SK-N-SH (cell line): ENCODE measurements at regions of chr19 and their contacts with region 1.

Region 1: DNA sequence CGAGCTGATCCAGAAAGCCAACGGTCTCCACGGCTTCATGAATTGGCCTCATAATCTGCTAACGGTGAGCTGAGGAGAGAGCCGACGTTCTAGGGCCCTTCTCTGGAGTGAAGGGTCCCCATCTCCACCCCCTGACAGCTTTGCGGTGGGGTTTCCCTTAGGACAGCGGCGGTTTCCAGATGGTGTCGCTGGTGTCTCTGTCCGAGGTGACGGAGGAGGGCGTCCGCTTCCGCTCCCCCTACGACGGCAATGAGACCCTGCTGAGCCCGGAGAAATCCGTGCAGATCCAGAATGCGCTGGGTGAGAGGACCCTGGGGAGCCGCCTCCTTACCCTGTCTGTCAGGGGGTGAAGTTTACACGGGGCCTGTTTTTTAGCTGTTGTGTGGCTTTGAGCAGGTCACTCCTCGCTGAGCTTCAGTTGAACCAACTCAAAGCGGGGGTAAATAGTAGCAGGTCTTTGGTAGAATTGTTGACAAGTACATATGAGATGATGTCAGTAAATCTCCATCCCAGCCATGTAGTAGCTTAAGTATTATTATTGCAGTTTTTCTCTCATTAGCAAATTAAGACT is 801 bp downstream of the QTRT1 start:
- DNase-seq: peak; percentile 82
- H3K4me3 ChIP-seq: peak overlapping the region; percentile 69 to 70
- H3K27ac ChIP-seq: peak overlapping the region; percentile 45 to 46; a peak in 2 of 4 replicates
- H3K4me1 ChIP-seq: no peaks in the 10 kb centered on the region; a peak in 1 of 4 replicates
- H3K27me3 ChIP-seq: no peaks in the 10 kb centered on the region
- CTCF ChIP-seq: no peak
- EP300 ChIP-seq: no peak
- RAD21 ChIP-seq: peak; percentile 35

Region 2: GRCh38 chr19:10789866-10790265 is 87.8 kb after region 1 on chr19:
- CTCF ChIA-PET with region 1: no interaction called
- POLR2A ChIA-PET with region 1: no interaction called
- DNase-seq: no peak
- H3K4me3 ChIP-seq: no peak overlapping the region
- H3K27ac ChIP-seq: no peak overlapping the region
- H3K4me1 ChIP-seq: no peaks in the 10 kb centered on the region
- H3K27me3 ChIP-seq: no peaks in the 10 kb centered on the region
- CTCF ChIP-seq: no peak
- EP300 ChIP-seq: no peak
- RAD21 ChIP-seq: no peak

Region 3: DNA sequence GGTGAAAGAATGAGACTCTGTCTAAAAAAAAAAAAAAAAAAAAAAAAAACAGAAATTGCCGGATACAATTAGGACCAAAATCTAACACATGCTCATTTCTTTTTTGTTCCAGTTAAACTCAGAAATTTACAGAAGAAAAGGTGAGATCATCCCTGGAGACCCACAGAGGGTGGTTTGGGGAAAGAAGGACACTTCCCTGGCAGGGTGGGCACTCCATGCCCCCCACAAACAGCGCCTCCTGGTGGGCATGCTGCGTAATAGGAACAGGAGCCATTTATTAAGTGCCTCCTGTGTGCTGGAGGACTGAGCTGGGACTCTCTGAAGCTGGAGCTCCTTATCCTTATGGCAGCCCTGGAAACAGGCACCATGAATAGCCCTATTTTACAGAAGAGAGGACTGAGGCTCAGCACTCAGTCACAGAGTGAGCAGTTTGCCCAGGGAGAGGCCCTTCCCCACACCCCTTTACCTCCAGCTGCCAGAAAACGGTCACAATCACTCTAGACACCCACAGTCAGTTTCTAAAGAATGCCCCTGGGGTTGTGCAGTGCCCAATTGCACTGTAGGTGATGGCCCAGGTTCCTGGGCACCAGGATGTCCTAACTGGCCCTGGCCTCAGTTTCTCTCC is 156.3 kb after region 1 on chr19:
- CTCF ChIA-PET with region 1: interaction called, 30 read pairs
- POLR2A ChIA-PET with region 1: interaction called, 4 read pairs
- DNase-seq: peak; percentile 69
- H3K4me3 ChIP-seq: peak overlapping the region in 1 of 2 experiments; percentile 52; a peak in 1 of 4 replicates
- H3K27ac ChIP-seq: no peak overlapping the region
- H3K4me1 ChIP-seq: no peaks in the 10 kb centered on the region
- H3K27me3 ChIP-seq: no peaks in the 10 kb centered on the region
- CTCF ChIP-seq: peak; percentile 95
- EP300 ChIP-seq: no peak
- RAD21 ChIP-seq: peak; percentile 47